ENCODE measurements at regions of chr6 and their contacts with region 1.

Region 1: GRCh38 chr6:116531675-116532570 is 13.6 kb downstream of the TRAPPC3L start:
- DNase-seq: peak in 1 of 2 donors; percentile 81
- H3K4me3 ChIP-seq: no peak overlapping the region
- H3K27ac ChIP-seq: no peak overlapping the region
- H3K4me1 ChIP-seq: peaks cover 0 to 2% of the 10 kb centered on the region in 2 donors
- H3K27me3 ChIP-seq: no peaks in the 10 kb centered on the region
- CTCF ChIP-seq: peak; percentile 68 to 75 (median 73)

Region 2: GRCh38 chr6:116190550-116190949 is 341.4 kb before region 1 on chr6:
- intact Hi-C with region 1: no loop called
- DNase-seq: no peak
- H3K4me3 ChIP-seq: no peak overlapping the region
- H3K27ac ChIP-seq: no peak overlapping the region
- H3K4me1 ChIP-seq: peaks cover 0 to 8% of the 10 kb centered on the region in 2 donors
- H3K27me3 ChIP-seq: no peaks in the 10 kb centered on the region
- CTCF ChIP-seq: no peak

Region 3: DNA sequence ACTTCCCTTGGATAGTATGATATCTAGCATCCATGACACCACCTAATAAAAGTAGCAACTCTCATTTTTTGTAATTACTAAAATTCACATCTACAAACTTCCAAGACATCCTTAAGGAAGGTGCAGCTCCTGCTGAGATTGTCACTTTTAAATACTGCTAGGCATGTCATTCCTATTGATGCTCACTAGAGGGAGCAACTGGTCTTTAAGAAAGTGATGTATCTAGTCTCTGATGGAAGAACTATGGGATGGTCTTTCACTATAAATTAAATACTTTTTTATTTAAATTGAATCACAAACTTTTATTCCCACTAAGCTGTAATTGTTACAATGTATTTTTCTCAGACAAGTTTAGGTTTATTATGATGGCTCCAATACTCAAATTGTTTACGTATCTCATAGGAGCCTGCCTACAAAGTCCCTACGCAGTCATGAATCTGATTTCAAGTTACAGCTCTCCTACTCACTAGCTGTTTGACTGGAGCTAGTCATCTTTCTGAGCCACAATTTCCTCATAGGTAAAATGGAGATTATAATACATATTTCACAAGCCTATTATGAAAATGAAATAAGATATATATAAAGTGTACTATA is 244.1 kb before region 1 on chr6:
- intact Hi-C with region 1: loop called (anchors 1 kb)
- DNase-seq: no peak
- H3K4me3 ChIP-seq: no peak overlapping the region
- H3K27ac ChIP-seq: no peak overlapping the region
- H3K4me1 ChIP-seq: no peaks in the 10 kb centered on the region
- H3K27me3 ChIP-seq: no peaks in the 10 kb centered on the region
- CTCF ChIP-seq: peak; percentile 71 to 90 (median 87)

Region 4: GRCh38 chr6:116447496-116448011 is 84.4 kb before region 1 on chr6:
- intact Hi-C with region 1: loop called (anchors 5 kb)
- DNase-seq: peak in 1 of 2 donors; percentile 66
- H3K4me3 ChIP-seq: no peak overlapping the region
- H3K27ac ChIP-seq: no peak overlapping the region
- H3K4me1 ChIP-seq: peaks cover 0 to 6% of the 10 kb centered on the region in 2 donors
- H3K27me3 ChIP-seq: no peaks in the 10 kb centered on the region
- CTCF ChIP-seq: peak in 1 of 3 experiments; percentile 28

Region 5: DNA sequence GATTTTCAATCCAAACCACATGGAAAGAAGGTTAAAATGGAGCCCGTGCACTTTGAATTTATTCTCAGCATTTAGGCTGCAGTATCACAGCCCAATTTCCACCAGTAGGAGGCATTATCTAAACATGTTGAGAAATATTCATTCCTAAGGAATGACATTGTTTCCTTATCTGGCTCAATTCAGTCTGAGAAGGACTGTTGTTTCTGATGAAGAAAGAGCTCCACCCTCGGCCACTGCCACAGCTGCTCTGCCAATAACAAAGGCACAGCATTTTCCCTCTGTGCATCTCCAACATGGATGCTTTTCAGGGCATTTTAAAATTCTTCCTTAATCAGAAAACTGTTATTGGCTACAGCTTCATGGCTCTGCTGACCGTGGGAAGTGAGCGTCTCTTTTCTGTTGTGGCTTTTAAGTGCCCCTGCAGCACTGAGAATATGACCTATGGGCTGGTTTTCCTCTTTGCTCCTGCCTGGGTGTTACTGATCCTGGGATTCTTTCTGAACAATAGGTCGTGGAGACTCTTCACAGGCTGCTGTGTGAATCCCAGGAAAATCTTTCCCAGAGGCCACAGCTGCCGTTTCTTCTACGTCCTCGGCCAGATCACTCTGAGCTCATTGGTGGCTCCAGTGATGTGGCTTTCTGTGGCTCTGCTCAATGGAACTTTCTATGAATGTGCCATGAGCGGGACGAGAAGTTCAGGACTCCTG is 20.4 kb before region 1 on chr6 and contains the start of gene CALHM5:
- intact Hi-C with region 1: loop called (anchors 1 kb)
- DNase-seq: peak in 1 of 2 donors; percentile 81
- H3K4me3 ChIP-seq: peak within 1 kb of the TSS; percentile 58 to 69
- H3K27ac ChIP-seq: peak within 1 kb of the TSS; percentile 92 to 93
- H3K4me1 ChIP-seq: peaks cover 0 to 2% of the 10 kb centered on the region in 2 donors
- H3K27me3 ChIP-seq: no peaks in the 10 kb centered on the region
- CTCF ChIP-seq: peak; percentile 70 to 80 (median 76)
- total RNA-seq, gene CALHM5: 3.4 TPM

Region 6: DNA sequence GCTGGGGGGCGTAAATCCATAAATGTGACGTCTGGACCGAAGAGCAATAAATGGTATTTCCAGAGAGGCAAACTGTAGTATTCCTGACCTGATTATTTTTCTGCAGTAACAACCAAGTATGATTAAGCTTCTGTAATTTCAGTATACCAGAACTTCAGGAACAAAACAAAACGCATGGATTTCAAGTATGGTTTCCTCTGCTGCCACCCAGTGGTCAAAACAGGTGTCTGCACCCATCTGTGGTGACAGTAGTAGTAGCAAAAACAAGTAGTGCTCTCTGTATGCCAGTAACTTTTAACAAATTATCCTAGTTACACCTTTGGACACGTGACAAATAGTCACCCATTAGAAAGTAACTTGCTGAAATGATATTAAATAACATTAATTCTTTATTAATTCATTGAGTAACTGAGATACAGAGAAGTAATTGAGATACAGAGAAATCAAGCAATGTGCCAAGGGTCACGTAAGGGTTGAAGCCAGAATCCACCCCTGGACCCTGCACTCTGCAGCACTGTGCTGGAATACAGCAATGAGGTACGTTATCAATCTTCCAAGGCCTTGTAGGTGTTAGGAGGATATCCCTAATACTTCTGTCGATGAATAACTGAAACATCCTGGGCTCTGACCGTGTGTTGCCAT is 29.6 kb after region 1 on chr6:
- intact Hi-C with region 1: loop called (anchors 1 kb)
- DNase-seq: peak; percentile 31 to 88
- H3K4me3 ChIP-seq: peak overlapping the region in 1 of 2 donors; percentile 43
- H3K27ac ChIP-seq: no peak overlapping the region
- H3K4me1 ChIP-seq: no peaks in the 10 kb centered on the region
- H3K27me3 ChIP-seq: no peaks in the 10 kb centered on the region
- CTCF ChIP-seq: peak; percentile 75 to 91 (median 89)

Region 7: GRCh38 chr6:116605935-116606334 is 74.0 kb after region 1 on chr6:
- intact Hi-C with region 1: no loop called
- DNase-seq: no peak
- H3K4me3 ChIP-seq: no peak overlapping the region
- H3K27ac ChIP-seq: no peak overlapping the region
- H3K4me1 ChIP-seq: no peaks in the 10 kb centered on the region
- H3K27me3 ChIP-seq: no peaks in the 10 kb centered on the region
- CTCF ChIP-seq: no peak